Naive thymus-derived CD8-positive, alpha-beta T cell (primary cell): ENCODE measurements at regions of chr7 and their contacts with region 1.

Region 1: DNA sequence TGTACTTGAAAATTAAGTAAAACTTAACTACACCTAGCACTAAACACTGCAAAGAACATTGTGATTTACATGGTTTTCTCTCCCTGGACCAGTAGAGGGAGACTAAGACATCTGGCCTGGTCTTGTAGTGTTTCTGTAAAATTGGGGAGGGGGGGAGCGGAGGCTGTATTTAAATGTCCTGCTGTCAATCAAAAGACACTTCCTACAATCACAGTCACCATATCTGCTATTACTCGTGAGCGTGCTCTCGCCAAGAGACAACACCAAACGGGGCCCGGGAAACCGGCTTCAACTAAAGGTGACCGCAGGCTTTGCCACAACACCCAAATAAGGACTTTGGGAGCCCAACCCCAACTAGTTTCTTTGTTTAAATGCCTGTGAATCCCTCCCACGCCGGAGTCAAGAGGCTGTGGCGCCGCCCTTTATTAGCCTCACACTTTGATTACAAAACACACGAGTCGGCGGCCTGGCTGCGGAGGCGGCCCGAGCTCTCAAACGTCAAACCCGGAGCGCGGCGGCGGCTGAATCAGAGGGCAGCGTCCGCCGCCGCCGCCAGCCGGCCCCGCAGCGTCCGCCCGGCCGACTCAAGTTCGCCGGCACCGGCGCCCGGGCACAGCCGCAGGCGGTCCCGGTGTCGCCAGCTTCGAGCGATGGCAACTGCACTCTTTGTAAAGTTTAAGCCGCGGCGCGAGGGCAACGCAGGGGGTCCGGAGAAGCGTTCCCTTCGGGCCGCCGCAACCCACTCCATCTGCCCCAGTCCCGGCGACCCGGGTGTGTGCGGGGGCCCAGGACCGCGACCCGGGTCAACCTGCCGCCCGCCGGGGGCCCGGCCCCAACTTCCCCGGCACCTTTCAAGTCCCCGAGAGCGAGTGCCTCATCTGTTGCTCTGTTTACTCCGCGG is 1.3 kb downstream of the KDM7A start:
- DNase-seq: peak; percentile 73 to 98 (median 92)
- ATAC-seq: peak; percentile 70 to 71
- H3K4me3 Mint-ChIP-seq: peak overlapping the region; percentile 84 to 94 (median 91)
- H3K27ac Mint-ChIP-seq: peak overlapping the region; percentile 85 to 98 (median 95)
- H3K4me1 Mint-ChIP-seq: peaks cover 27 to 63% (median 50%) of the 10 kb centered on the region in 4 donors
- H3K27me3 Mint-ChIP-seq: no peaks in the 10 kb centered on the region

Region 2: DNA sequence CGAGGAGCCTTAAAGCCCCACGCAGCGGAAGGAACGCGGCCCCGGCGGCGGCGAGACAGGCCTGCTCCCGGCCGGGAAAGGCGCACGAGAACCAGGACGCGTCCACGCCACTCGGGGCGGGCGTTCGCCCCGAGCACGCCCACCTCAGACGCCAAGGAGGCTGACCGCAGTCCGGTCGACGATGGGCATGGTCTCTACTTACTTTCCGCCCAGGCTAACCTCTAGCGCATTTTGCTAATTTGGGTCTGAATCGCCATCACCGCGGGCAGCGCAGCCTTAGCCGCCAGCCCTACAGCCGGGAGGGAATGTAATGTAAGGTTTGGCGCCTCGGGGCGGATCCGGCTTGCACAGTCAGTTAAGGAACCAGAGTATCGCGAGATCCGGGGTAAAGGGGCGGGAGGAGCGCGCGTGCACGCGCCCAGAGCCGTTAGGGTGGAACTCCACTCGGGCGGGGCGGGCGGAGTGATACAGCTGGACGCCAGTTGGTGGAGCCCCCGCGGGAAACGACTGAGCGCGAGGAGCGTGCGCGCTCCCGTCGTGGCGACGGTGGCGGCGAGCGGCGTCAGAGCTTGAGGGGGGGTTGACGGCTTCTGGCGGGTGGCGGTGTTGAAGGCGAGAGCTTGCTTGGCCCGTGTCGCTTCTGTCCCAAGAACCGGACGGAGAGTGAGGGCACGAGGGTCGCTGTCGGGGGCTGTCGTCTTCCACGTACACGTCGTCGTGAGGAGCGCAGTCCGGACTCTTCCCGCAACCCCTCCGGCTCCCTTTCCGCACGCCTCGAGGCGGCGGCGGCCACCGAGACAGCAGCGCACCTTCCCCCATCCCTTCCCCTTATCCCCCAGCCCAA is 815.9 kb before region 1 on chr7 and contains the start of gene LUC7L2:
- POLR2A ChIA-PET with region 1: interaction called, 13 read pairs
- DNase-seq: peak; percentile 98 to 100 (median 99)
- ATAC-seq: peak; percentile 75
- H3K4me3 Mint-ChIP-seq: peak within 1 kb of the TSS; percentile 94 to 99 (median 98)
- H3K27ac Mint-ChIP-seq: peak within 1 kb of the TSS; percentile 91 to 100 (median 99)
- H3K4me1 Mint-ChIP-seq: peaks cover 8 to 62% (median 43%) of the 10 kb centered on the region in 4 donors
- H3K27me3 Mint-ChIP-seq: no peaks in the 10 kb centered on the region
- polyA plus RNA-seq, gene LUC7L2: 51.6 to 80.6 (median 55.2) TPM

Region 3: GRCh38 chr7:140079121-140079536 is 96.3 kb before region 1 on chr7:
- POLR2A ChIA-PET with region 1: no interaction called
- DNase-seq: no peak
- ATAC-seq: peak in 1 of 2 donors; percentile 17
- H3K4me3 Mint-ChIP-seq: no peak overlapping the region
- H3K27ac Mint-ChIP-seq: peak overlapping the region in 7 of 10 donors; percentile 4 to 72 (median 64)
- H3K4me1 Mint-ChIP-seq: peaks cover 9 to 25% (median 21%) of the 10 kb centered on the region in 4 donors
- H3K27me3 Mint-ChIP-seq: peaks cover 0 to 1% (median 0%) of the 10 kb centered on the region in 5 donors

Region 4: DNA sequence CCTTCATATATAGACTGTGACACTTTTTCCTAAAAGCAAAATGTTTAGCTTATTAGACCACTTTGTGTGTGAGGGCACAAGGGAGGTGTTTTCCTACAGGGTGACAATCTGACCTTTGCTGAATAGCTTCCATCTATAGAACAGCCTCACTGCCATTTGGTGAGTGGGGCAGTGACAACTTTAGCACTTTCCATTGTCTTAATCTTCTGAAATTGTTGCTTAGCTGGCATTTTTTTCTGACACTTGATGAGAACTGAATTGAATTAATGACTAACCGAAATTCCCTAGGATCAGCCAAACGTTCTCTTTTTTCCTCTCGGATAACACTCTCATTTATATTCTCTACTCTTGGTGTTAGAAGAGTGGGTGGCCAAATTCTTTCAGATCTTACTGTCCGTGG is 28.9 kb before region 1 on chr7:
- POLR2A ChIA-PET with region 1: no interaction called
- DNase-seq: no peak
- ATAC-seq: no peak
- H3K4me3 Mint-ChIP-seq: no peak overlapping the region
- H3K27ac Mint-ChIP-seq: peak overlapping the region in 3 of 10 donors; percentile 9 to 53 (median 9)
- H3K4me1 Mint-ChIP-seq: peaks cover 38 to 76% (median 72%) of the 10 kb centered on the region in 4 donors
- H3K27me3 Mint-ChIP-seq: no peaks in the 10 kb centered on the region

Region 5: DNA sequence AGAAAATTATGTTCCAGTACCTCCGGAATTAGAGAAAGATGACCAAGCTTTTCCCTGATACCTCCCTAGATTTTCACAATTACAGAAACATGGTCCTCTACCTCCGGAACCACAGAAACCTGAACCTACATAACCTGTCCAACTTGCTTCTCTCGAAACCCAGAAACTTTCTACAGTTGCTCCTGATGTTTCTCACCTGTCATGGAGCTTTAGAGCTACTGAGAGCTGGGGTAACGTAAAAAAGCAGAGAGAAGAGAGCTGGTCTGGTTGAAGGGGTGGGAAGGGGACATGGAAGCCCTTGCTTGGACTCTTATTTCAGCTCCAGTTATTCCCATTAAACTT is 44.7 kb after region 1 on chr7:
- POLR2A ChIA-PET with region 1: interaction called, 303 read pairs
- DNase-seq: no peak
- ATAC-seq: no peak
- H3K4me3 Mint-ChIP-seq: no peak overlapping the region
- H3K27ac Mint-ChIP-seq: no peak overlapping the region
- H3K4me1 Mint-ChIP-seq: peaks cover 18 to 37% (median 27%) of the 10 kb centered on the region in 4 donors
- H3K27me3 Mint-ChIP-seq: no peaks in the 10 kb centered on the region

Region 6: GRCh38 chr7:140260352-140261104 is 85.1 kb after region 1 on chr7:
- POLR2A ChIA-PET with region 1: interaction called, 64 read pairs
- DNase-seq: no peak
- ATAC-seq: no peak
- H3K4me3 Mint-ChIP-seq: peak overlapping the region in 2 of 10 donors; percentile 10 to 34
- H3K27ac Mint-ChIP-seq: peak overlapping the region in 9 of 10 donors; percentile 6 to 95 (median 82)
- H3K4me1 Mint-ChIP-seq: peaks cover 34 to 58% (median 55%) of the 10 kb centered on the region in 4 donors
- H3K27me3 Mint-ChIP-seq: no peaks in the 10 kb centered on the region

Region 7: GRCh38 chr7:140275069-140275965 is 99.8 kb after region 1 on chr7:
- POLR2A ChIA-PET with region 1: interaction called, 10 read pairs
- DNase-seq: no peak
- ATAC-seq: no peak
- H3K4me3 Mint-ChIP-seq: no peak overlapping the region
- H3K27ac Mint-ChIP-seq: peak overlapping the region in 1 of 10 donors; percentile 58
- H3K4me1 Mint-ChIP-seq: peaks cover 0 to 7% (median 3%) of the 10 kb centered on the region in 4 donors
- H3K27me3 Mint-ChIP-seq: no peaks in the 10 kb centered on the region

Region 8: DNA sequence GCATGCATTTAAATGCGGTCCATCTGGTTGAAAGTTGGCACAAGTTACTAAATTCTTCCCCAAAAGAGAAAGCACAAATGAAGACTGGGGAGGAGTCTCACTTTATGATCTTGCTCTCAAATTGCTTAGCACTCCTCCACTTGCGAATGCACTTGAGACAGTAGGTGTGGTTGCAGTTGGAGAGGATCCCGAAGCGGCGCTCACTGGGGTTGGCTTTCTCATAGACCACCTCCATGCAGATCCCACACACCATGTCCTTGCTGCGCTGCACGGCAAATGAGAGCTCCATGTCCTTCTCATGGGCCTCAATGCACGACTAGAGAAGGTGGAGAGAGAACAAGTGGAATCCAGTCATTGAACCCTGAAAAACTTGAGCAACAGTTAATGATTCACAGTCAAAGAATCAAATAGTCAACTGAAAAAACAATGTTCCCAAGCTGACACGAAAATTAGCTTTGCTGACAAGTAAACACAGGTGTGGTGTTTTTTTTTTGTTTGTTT is 281.1 kb after region 1 on chr7:
- POLR2A ChIA-PET with region 1: no interaction called
- DNase-seq: no peak
- ATAC-seq: no peak
- H3K4me3 Mint-ChIP-seq: no peak overlapping the region
- H3K27ac Mint-ChIP-seq: peak overlapping the region in 1 of 10 donors; percentile 33
- H3K4me1 Mint-ChIP-seq: peaks cover 16 to 40% (median 32%) of the 10 kb centered on the region in 4 donors
- H3K27me3 Mint-ChIP-seq: no peaks in the 10 kb centered on the region

Region 9: GRCh38 chr7:140479062-140479738 is 303.7 kb after region 1 on chr7 and contains the start of gene MKRN1:
- POLR2A ChIA-PET with region 1: interaction called, 15 read pairs
- DNase-seq: peak; percentile 87 to 95 (median 92)
- ATAC-seq: peak; percentile 85 to 86
- H3K4me3 Mint-ChIP-seq: peak within 1 kb of the TSS; percentile 94 to 100 (median 99)
- H3K27ac Mint-ChIP-seq: peak within 1 kb of the TSS; percentile 97 to 99 (median 99)
- H3K4me1 Mint-ChIP-seq: peaks cover 17 to 30% (median 28%) of the 10 kb centered on the region in 4 donors
- H3K27me3 Mint-ChIP-seq: no peaks in the 10 kb centered on the region
- polyA plus RNA-seq, gene MKRN1: 92.6 to 141 (median 109) TPM

Region 10: GRCh38 chr7:140646931-140647647 is 471.6 kb after region 1 on chr7:
- POLR2A ChIA-PET with region 1: no interaction called
- DNase-seq: peak in 7 of 10 donors; percentile 16 to 42 (median 27)
- ATAC-seq: peak; percentile 95 to 98
- H3K4me3 Mint-ChIP-seq: no peak overlapping the region
- H3K27ac Mint-ChIP-seq: peak overlapping the region in 5 of 10 donors; percentile 12 to 80 (median 31)
- H3K4me1 Mint-ChIP-seq: peaks cover 6 to 11% (median 9%) of the 10 kb centered on the region in 4 donors
- H3K27me3 Mint-ChIP-seq: peaks cover 4 to 22% (median 11%) of the 10 kb centered on the region in 5 donors